Vagina (tissue), 2 donors: ENCODE measurements at regions of chr6 and their contacts with region 1.

Region 1: DNA sequence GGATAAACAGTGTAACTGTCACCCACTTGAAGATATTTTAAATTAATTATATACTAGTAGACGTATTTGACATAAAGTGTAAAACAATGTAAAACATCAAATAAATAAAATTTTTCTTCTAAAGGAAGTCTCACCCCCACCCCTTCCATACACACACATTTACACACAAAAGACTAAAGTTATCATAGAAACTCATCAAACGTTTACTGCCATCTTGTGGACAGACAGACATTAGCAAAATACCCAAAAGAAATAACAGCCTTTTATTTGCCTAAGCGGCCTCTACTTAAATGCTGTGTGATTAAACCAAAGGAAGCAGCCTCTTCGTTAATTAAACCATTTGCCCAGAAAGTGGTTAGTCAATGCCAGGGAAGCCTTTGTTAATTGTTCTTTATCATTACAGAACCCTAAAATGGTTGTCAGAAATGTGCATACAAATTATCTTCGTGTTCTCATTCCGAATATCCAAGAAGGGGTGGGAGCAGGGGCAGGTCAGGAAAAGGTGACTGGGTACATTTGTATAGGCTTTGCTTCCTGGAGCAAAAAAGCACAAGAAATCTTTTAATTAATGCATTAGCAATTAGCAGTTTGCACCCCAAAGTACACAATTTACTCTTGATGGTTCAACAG is 176.2 kb upstream of the SASH1 start:
- DNase-seq: no peak
- H3K4me3 ChIP-seq: no peak overlapping the region
- H3K27ac ChIP-seq: no peak overlapping the region
- H3K4me1 ChIP-seq: no peaks in the 10 kb centered on the region
- H3K27me3 ChIP-seq: no peaks in the 10 kb centered on the region
- CTCF ChIP-seq: peak; percentile 19 to 71 (median 29)
- POLR2A ChIP-seq: no peak

Region 2: DNA sequence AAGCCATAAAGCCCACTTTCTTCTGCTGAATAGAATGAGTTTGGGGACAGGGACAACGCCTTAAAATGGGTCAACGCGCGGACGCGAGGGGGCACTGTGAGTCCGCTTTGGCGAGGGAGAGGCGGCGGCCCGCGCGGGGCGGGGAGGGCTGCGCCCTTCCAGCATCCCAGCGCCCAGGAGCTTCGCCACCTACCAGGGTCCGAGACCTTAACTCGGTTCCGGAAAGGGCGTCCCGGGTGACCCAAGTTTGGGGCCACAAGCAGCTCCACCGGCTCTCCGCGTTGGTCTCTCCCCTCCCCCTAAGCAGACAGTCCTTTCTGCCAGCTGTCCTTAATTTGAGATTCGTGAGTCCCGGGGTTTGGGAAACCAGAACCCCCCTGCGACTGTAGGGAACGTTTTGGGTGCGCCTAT is 659.7 kb before region 1 on chr6:
- intact Hi-C with region 1: loop called (anchors 10 kb)
- DNase-seq: no peak
- H3K4me3 ChIP-seq: peak overlapping the region; percentile 62 to 71
- H3K27ac ChIP-seq: no peak overlapping the region
- H3K4me1 ChIP-seq: peaks cover 20% of the 10 kb centered on the region
- H3K27me3 ChIP-seq: no peaks in the 10 kb centered on the region
- CTCF ChIP-seq: peak; percentile 33 to 83 (median 56)
- POLR2A ChIP-seq: no peak